ENCODE measurements at regions of chr11 and their contacts with region 1.

Region 1: DNA sequence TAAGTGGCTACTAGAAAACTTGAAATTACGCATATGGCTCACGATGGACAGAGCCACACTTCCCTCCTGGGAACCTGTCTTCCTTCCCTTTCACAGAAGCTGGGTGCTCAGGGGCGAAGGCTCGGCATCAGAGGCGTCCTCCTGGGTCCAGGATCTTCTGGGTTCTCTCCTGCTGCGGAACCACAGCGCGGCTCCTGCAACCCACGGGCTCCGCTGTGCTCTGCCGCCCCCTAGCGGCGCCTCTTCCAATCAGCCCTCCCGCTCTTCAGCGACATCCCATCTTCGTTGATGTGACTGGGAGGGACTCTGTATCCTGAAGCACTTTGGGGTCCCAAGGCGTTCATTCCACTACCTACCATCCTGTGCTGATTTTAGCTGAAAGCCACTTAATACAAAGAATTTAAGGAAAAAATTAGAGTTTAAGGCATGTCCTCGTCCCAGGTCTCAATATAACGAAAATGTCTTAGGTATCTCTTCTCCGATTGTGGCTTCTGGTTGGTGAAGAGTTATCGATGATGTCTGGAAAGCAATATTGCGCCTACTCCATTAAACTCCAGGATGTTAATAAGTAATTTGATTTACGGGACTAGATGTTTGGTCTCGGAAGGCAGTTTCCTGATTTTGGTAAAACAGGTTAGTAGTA is 14.8 kb upstream of the RPS3 start:
- DNase-seq: peak; percentile 77 to 82 (median 80)
- ATAC-seq: peak; percentile 70
- H3K4me3 ChIP-seq: no peak overlapping the region
- H3K27ac ChIP-seq: no peak overlapping the region
- H3K4me1 ChIP-seq: peaks cover 6% of the 10 kb centered on the region
- H3K27me3 ChIP-seq: no peaks in the 10 kb centered on the region
- CTCF ChIP-seq: peak; percentile 89 to 95 (median 94)
- POLR2A ChIP-seq: no peak

Region 2: GRCh38 chr11:75031771-75032549 is 352.6 kb before region 1 on chr11:
- intact Hi-C with region 1: no loop called
- DNase-seq: peak; percentile 74 to 84 (median 81)
- ATAC-seq: peak; percentile 71
- H3K4me3 ChIP-seq: no peak overlapping the region
- H3K27ac ChIP-seq: no peak overlapping the region
- H3K4me1 ChIP-seq: no peaks in the 10 kb centered on the region
- H3K27me3 ChIP-seq: no peaks in the 10 kb centered on the region
- CTCF ChIP-seq: peak; percentile 60 to 78 (median 67)
- POLR2A ChIP-seq: no peak

Region 3: GRCh38 chr11:75330286-75330685 is 54.3 kb before region 1 on chr11:
- intact Hi-C with region 1: loop called (anchors 5 kb)
- DNase-seq: no peak
- ATAC-seq: no peak
- H3K4me3 ChIP-seq: no peak overlapping the region
- H3K27ac ChIP-seq: peak overlapping the region in 3 of 4 donors; percentile 29 to 65 (median 34)
- H3K4me1 ChIP-seq: peaks cover 51% of the 10 kb centered on the region
- H3K27me3 ChIP-seq: no peaks in the 10 kb centered on the region
- CTCF ChIP-seq: no peak
- POLR2A ChIP-seq: no peak

Region 4: DNA sequence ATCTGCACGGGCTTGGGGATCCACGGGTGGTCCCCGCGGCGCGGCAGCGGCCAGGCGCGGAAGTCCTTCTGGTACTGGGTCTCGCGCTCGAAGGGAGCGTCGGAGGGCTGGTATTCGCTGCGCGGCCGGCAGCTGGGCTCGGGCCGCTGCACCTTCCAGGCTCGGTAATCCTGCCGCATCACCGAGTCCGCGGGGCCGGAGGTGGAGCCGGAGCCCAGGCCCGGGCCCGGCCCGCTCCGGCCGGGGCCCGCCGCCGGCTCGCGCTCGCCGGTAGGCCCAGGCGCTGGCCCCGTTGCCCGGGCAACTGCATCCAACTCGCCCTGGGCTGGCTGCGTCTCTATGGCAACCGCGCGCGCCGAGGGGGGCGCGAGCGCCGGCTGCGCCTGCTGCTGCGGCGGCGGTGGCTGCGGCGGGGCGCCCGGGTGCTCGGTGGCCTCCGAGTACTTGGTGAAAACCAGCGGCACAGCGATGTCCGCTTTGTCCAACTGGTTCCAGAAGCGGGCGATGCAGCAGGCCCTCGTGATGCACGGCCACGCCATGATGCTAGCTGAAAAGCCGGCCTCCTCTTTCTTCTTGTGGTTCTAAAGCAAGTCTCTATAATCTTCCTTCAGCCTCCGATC is 283.4 kb after region 1 on chr11:
- intact Hi-C with region 1: no loop called
- DNase-seq: peak; percentile 44 to 68 (median 53)
- ATAC-seq: peak; percentile 69
- H3K4me3 ChIP-seq: no peak overlapping the region
- H3K27ac ChIP-seq: peak overlapping the region in 2 of 4 donors; percentile 22 to 32
- H3K4me1 ChIP-seq: peaks cover 19% of the 10 kb centered on the region
- H3K27me3 ChIP-seq: peaks cover 0 to 11% of the 10 kb centered on the region in 2 donors
- CTCF ChIP-seq: no peak
- POLR2A ChIP-seq: no peak

Region 5: DNA sequence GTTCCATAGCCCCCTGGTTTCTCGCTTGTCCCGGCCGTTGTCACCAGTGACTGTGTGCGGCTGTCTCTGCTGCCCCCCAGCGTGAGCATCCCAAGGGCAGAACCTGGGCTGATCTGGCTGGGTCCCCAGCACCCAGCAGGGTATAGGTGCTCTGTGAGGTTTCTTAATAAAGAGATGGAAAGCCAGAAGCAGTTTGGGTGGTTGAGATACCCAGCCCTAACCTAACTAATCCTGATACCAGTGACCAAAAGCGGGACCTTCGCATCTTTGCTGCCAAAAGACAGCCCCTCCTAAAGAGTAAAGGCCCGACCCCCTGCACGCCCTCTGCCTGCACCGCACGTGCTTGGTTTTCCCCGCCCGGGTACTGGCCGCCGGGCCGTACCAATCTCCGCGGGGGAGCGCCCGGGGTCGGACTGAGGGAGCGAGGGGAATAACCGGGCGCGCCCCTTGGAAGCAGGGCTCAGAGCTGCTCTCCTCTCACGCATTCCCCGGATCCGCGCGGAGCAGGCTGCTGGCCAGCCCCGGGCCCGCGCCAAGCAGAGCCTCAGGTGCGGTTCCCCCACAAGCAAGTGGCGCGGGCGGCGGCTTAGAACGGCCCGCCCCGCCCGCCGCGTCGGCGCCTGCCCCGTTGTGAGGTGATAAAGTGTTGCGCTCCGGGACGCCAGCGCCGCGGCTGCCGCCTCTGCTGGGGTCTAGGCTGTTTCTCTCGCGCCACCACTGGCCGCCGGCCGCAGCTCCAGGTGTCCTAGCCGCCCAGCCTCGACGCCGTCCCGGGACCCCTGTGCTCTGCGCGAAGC is 383.8 kb after region 1 on chr11 and contains the start of gene DGAT2:
- intact Hi-C with region 1: no loop called
- DNase-seq: peak; percentile 67 to 81 (median 74)
- ATAC-seq: peak; percentile 89
- H3K4me3 ChIP-seq: peak within 1 kb of the TSS in 1 of 2 donors; percentile 5
- H3K27ac ChIP-seq: peak within 1 kb of the TSS in 1 of 4 donors; percentile 35
- H3K4me1 ChIP-seq: peaks cover 19% of the 10 kb centered on the region
- H3K27me3 ChIP-seq: no peaks in the 10 kb centered on the region
- CTCF ChIP-seq: peak in 3 of 7 experiments; percentile 6 to 38 (median 12)
- POLR2A ChIP-seq: no peak
- total RNA-seq, gene DGAT2: 9.3 to 38.6 TPM

Measured in body of pancreas (tissue), 4 donors.